ENCODE measurements at regions of chr2 and their contacts with region 1.

Region 1: DNA sequence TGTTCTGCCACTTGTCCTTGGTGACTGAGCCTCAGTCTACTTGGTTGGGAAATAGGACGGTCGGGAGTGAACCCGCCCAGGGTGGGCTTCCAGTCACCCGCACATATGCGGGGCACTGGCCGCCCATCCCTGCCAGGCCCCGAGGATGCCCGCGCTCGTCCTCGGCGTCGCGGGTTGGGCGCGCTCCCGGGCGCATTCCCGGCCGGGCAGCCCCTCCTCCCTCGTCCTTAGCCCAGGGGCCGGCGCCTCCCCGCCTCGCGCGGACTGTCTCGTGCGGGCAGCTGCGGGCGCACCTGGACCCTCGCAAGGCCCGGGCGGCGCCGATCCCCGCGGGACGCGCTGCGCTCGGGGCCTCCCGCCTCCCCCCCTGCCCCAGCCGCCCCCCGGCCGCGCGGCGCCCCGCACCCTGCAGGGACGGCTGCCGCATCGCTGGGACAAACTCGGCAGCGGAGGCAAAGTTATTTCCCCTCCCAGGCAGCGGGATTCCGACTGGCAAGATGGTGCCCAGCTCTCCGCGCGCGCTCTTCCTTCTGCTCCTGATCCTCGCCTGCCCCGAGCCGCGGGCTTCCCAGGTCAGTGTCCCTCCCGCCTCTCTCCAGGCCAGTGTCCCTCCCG is at the start of gene FBLN7:
- DNase-seq: peak in 2 of 9 experiments; percentile 17 to 47
- ATAC-seq: peak; percentile 44
- H3K4me3 ChIP-seq: peak within 1 kb of the TSS; percentile 19 to 60
- H3K4me3 Mint-ChIP-seq: peak within 1 kb of the TSS; percentile 75
- H3K27ac ChIP-seq: no peak within 1 kb of the TSS
- H3K27ac Mint-ChIP-seq: no peak within 1 kb of the TSS
- H3K4me1 ChIP-seq: peaks cover 4% of the 10 kb centered on the region
- H3K4me1 Mint-ChIP-seq: peaks cover 12% of the 10 kb centered on the region
- H3K27me3 ChIP-seq: peaks cover 4 to 8% of the 10 kb centered on the region in 2 experiments
- H3K27me3 Mint-ChIP-seq: peaks cover 24% of the 10 kb centered on the region
- CTCF ChIP-seq: no peak
- total RNA-seq, gene FBLN7: 2.1 to 2.5 TPM

Region 2: DNA sequence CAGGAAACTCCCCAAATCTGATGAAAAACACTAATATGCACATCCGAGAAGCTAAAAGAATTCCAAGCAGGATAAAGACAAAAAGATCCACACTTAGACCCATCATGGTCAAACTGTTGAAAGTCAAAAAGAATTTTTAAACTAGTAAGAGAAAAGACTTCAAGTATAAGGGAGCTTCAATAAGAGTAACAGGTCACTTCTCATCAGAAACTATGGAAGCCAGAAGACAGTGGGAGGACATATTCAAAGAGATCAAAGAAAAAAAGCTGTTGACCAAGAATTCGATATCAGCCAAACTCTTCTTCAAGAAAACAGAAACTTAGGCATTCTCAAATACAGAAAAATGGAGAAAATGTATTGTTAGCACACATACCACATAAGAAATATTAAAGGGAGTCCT is 66.1 kb after region 1 on chr2:
- CTCF ChIA-PET with region 1: no interaction called
- POLR2A ChIA-PET with region 1: no interaction called
- intact Hi-C with region 1: loop called in 1 of 2 experiments (anchors 5 kb)
- DNase-seq: no peak
- ATAC-seq: no peak
- H3K4me3 ChIP-seq: no peak overlapping the region
- H3K4me3 Mint-ChIP-seq: no peak overlapping the region
- H3K27ac ChIP-seq: no peak overlapping the region
- H3K27ac Mint-ChIP-seq: no peak overlapping the region
- H3K4me1 ChIP-seq: no peaks in the 10 kb centered on the region
- H3K4me1 Mint-ChIP-seq: peaks cover 2% of the 10 kb centered on the region
- H3K27me3 ChIP-seq: peaks cover 0 to 4% of the 10 kb centered on the region in 2 experiments
- H3K27me3 Mint-ChIP-seq: no peaks in the 10 kb centered on the region
- CTCF ChIP-seq: no peak

Measured in CD8-positive, alpha-beta T cell (primary cell).